MCF 10A (cell line): ENCODE measurements at regions of chr4 and their contacts with region 1.

Region 1: GRCh38 chr4:149735796-149736195 is 79.8 kb downstream of the IQCM start:
- DNase-seq: peak; percentile 69
- H3K4me3 Mint-ChIP-seq: no peak overlapping the region
- H3K27ac Mint-ChIP-seq: no peak overlapping the region
- H3K4me1 Mint-ChIP-seq: no peaks in the 10 kb centered on the region
- H3K27me3 Mint-ChIP-seq: no peaks in the 10 kb centered on the region
- CTCF ChIP-seq: no peak

Region 2: GRCh38 chr4:149708513-149709175 is 27.2 kb before region 1 on chr4:
- CTCF ChIA-PET with region 1: no interaction called
- POLR2A ChIA-PET with region 1: interaction called, 3 read pairs
- intact Hi-C with region 1: loop called (anchors 2 kb)
- DNase-seq: peak; percentile 73
- H3K4me3 Mint-ChIP-seq: no peak overlapping the region
- H3K27ac Mint-ChIP-seq: peak overlapping the region; percentile 76
- H3K4me1 Mint-ChIP-seq: peaks cover 13% of the 10 kb centered on the region
- H3K27me3 Mint-ChIP-seq: no peaks in the 10 kb centered on the region
- CTCF ChIP-seq: no peak

Region 3: DNA sequence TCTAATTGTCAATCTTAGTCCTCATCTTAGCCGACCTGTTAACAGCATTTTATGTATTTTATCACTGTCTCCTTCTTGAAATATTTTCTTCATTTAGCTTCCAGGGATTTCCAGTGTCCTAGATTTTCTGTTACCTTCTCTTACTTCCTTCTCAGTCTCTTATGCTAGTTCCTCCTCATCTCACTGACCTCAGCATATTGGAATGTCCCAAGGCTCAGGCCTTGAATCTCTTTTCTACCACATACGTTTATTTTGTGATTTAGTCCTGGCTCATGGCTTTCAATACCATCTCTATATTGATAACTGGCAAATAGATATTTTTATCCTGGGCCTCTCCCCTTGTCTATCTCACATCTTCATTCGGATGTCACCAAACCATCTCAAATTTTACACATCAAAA is 18.7 kb after region 1 on chr4:
- CTCF ChIA-PET with region 1: no interaction called
- POLR2A ChIA-PET with region 1: no interaction called
- intact Hi-C with region 1: no loop called
- DNase-seq: no peak
- H3K4me3 Mint-ChIP-seq: no peak overlapping the region
- H3K27ac Mint-ChIP-seq: peak overlapping the region; percentile 21
- H3K4me1 Mint-ChIP-seq: peaks cover 16% of the 10 kb centered on the region
- H3K27me3 Mint-ChIP-seq: no peaks in the 10 kb centered on the region
- CTCF ChIP-seq: no peak